Adrenal gland (tissue), 19 donors: ENCODE measurements at regions of chr2 and their contacts with region 1.

Region 1: GRCh38 chr2:238684362-238685326 is 163.2 kb upstream of the TWIST2 start:
- DNase-seq: peak in 6 of 7 donors; percentile 39 to 82 (median 56)
- H3K4me3 ChIP-seq: no peak overlapping the region
- H3K27ac ChIP-seq: peak overlapping the region in 3 of 5 donors; percentile 38 to 69 (median 57)
- H3K4me1 ChIP-seq: peaks cover 0 to 7% of the 10 kb centered on the region in 2 donors
- H3K27me3 ChIP-seq: no peaks in the 10 kb centered on the region
- CTCF ChIP-seq: no peak
- POLR2A ChIP-seq: no peak

Region 2: GRCh38 chr2:237700512-237701032 is 984.1 kb before region 1 on chr2:
- intact Hi-C with region 1: no loop called
- DNase-seq: peak in 2 of 7 donors; percentile 28 to 75
- H3K4me3 ChIP-seq: no peak overlapping the region
- H3K27ac ChIP-seq: peak overlapping the region in 2 of 5 donors; percentile 65 to 82
- H3K4me1 ChIP-seq: peaks cover 55 to 100% of the 10 kb centered on the region in 2 donors
- H3K27me3 ChIP-seq: no peaks in the 10 kb centered on the region
- CTCF ChIP-seq: no peak
- POLR2A ChIP-seq: no peak

Region 3: DNA sequence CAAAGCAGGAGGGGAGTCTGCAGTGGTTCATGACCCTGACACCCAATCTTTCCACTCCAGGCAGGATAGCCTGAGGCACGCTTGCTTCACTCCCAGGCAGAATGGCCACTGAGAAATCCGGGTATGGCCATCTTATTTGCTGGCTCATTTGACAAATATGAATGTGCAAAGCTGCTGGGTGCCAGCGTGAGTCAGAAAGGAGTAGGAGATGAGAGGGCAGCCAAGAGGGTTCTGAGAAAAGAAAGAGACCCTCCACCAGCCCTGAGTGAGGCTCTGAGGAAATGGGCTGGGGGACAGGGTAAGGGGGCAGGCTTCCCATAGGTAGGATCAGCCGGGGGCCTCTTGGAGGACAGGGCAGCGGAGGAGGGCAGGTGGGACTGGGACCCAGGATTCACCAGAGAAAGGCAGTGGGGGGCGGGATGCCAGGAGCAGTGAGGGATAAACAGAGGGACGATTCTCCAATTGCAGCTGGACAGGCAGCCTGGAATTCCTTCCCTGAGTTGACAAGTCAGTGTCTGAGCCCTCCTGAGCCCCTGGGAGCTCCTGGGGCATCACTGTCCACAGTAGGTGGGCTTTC is 810.0 kb before region 1 on chr2:
- intact Hi-C with region 1: no loop called
- DNase-seq: peak in 1 of 7 donors; percentile 42
- H3K4me3 ChIP-seq: no peak overlapping the region
- H3K27ac ChIP-seq: no peak overlapping the region
- H3K4me1 ChIP-seq: no peaks in the 10 kb centered on the region
- H3K27me3 ChIP-seq: no peaks in the 10 kb centered on the region
- CTCF ChIP-seq: no peak
- POLR2A ChIP-seq: no peak

Region 4: GRCh38 chr2:238569507-238570195 is 115.0 kb before region 1 on chr2:
- intact Hi-C with region 1: no loop called
- DNase-seq: no peak
- H3K4me3 ChIP-seq: no peak overlapping the region
- H3K27ac ChIP-seq: no peak overlapping the region
- H3K4me1 ChIP-seq: no peaks in the 10 kb centered on the region
- H3K27me3 ChIP-seq: no peaks in the 10 kb centered on the region
- CTCF ChIP-seq: no peak
- POLR2A ChIP-seq: no peak

Region 5: DNA sequence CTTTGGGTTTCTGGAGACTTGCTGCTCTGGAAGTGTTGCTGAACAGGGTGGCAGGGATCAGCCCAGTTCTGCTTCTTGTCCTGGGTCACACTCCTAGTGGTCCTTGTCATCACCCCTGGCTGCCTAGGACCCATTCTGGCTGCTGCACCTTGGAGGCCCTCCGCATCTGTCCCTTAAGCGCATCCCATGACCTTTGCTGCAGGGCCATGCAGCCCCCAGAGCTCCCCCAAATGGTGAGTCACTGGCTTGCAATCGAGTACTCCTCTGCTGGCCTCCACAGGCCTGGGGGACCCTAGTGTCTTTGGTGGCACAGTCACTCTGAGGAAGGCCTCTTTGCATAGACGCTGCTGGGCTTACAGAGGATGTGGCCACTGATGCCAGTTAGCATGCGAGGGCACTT is 69.5 kb before region 1 on chr2:
- intact Hi-C with region 1: no loop called
- DNase-seq: no peak
- H3K4me3 ChIP-seq: no peak overlapping the region
- H3K27ac ChIP-seq: no peak overlapping the region
- H3K4me1 ChIP-seq: no peaks in the 10 kb centered on the region
- H3K27me3 ChIP-seq: no peaks in the 10 kb centered on the region
- CTCF ChIP-seq: no peak
- POLR2A ChIP-seq: no peak

Region 6: GRCh38 chr2:238657132-238658053 is 27.3 kb before region 1 on chr2:
- intact Hi-C with region 1: loop called in 1 of 2 experiments (anchors 2 kb)
- DNase-seq: peak in 1 of 7 donors; percentile 14
- H3K4me3 ChIP-seq: no peak overlapping the region
- H3K27ac ChIP-seq: no peak overlapping the region
- H3K4me1 ChIP-seq: no peaks in the 10 kb centered on the region
- H3K27me3 ChIP-seq: no peaks in the 10 kb centered on the region
- CTCF ChIP-seq: no peak
- POLR2A ChIP-seq: no peak